AG04450 (cell line): ENCODE measurements at regions of chr17 and their contacts with region 1.

Region 1: DNA sequence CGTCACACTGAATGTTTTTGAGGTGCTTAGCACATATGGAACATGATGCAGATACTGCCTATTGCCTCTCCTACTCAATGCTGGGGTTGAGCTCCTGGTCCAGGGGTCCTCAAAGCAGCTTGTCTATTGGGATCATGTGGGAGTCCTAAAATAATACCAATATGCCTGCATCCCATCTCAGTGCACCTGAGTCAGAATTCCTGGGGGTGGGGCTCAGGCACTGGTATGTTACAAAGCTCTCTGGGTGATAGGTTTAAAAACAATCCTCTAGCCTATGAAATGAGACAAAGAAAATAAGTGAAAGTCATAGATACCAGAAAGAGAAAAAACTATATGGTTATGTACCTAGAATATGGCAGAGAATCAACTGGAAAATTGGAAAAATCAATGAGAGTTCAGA is 156.6 kb upstream of the NLRP1 start:
- DNase-seq: no peak
- H3K4me3 ChIP-seq: no peak overlapping the region
- H3K27ac ChIP-seq: no peak overlapping the region
- H3K27me3 ChIP-seq: no peaks in the 10 kb centered on the region
- CTCF ChIP-seq: no peak

Region 2: DNA sequence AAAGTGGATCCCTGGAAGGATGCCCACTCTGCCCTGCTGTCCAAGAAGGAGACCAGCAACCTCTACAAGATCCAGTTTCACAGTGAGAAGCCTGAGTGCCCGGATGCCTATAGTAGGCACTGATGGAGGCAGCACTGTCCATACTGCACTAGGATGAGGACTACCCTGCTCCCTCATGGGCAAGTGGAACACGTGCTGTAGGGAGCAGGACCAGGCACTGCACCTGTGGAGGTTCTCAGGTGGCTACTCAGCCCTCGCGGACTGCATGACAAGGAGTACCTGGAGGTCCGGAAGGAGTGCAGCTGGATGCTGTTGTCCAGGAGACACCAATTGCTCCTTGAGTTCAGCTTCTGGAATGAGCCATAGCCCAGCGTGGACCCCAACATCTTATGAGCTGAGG is 10.6 kb before region 1 on chr17:
- CTCF ChIA-PET with region 1: interaction called, 10 read pairs
- POLR2A ChIA-PET with region 1: no interaction called
- DNase-seq: no peak
- H3K4me3 ChIP-seq: no peak overlapping the region
- H3K27ac ChIP-seq: no peak overlapping the region
- H3K27me3 ChIP-seq: no peaks in the 10 kb centered on the region
- CTCF ChIP-seq: no peak